T-cell (primary cell): ENCODE measurements at regions of chr10 and their contacts with region 1.

Region 1: DNA sequence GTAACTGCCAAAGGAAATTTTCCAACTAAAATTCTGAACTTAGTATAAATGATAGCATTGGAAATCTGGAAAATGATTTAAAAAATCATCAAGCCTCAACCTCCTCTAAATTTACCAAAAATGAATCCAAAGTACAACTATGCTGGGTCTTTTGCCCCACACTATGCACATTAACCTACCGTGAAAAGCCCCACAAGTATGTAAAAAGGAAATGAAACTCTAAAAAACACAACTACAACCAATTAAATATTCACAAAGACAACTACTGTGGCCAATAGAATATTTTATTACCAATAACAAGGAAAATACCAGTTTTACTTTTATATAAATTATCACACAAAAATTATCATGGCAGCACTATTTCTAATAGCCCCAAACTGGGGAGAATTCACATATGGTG is 19.3 kb downstream of the EIF3A start:
- DNase-seq: no peak
- ATAC-seq: no peak
- H3K4me3 ChIP-seq: no peak overlapping the region
- H3K4me3 Mint-ChIP-seq: no peak overlapping the region
- H3K27ac ChIP-seq: no peak overlapping the region
- H3K27ac Mint-ChIP-seq: peak overlapping the region; percentile 28 to 39
- H3K4me1 ChIP-seq: no peaks in the 10 kb centered on the region
- H3K4me1 Mint-ChIP-seq: peaks cover 16 to 31% (median 27%) of the 10 kb centered on the region in 3 donors
- H3K27me3 ChIP-seq: no peaks in the 10 kb centered on the region
- H3K27me3 Mint-ChIP-seq: no peaks in the 10 kb centered on the region

Region 2: GRCh38 chr10:119020629-119020950 is 40.8 kb before region 1 on chr10:
- CTCF ChIA-PET with region 1: no interaction called
- POLR2A ChIA-PET with region 1: interaction called in 1 of 2 experiments, 10 read pairs
- DNase-seq: no peak
- ATAC-seq: no peak
- H3K4me3 ChIP-seq: no peak overlapping the region
- H3K4me3 Mint-ChIP-seq: no peak overlapping the region
- H3K27ac ChIP-seq: no peak overlapping the region
- H3K27ac Mint-ChIP-seq: no peak overlapping the region
- H3K4me1 ChIP-seq: no peaks in the 10 kb centered on the region
- H3K4me1 Mint-ChIP-seq: no peaks in the 10 kb centered on the region
- H3K27me3 ChIP-seq: peaks cover 0 to 9% of the 10 kb centered on the region in 2 experiments
- H3K27me3 Mint-ChIP-seq: peaks cover 3 to 10% of the 10 kb centered on the region in 2 donors

Region 3: GRCh38 chr10:119030421-119031250 is 30.7 kb before region 1 on chr10:
- CTCF ChIA-PET with region 1: no interaction called
- POLR2A ChIA-PET with region 1: interaction called in 1 of 2 experiments, 10 read pairs
- DNase-seq: peak in 32 of 35 experiments; percentile 5 to 66 (median 32)
- ATAC-seq: peak; percentile 44 to 63 (median 58)
- H3K4me3 ChIP-seq: peak overlapping the region; percentile 15 to 48
- H3K4me3 Mint-ChIP-seq: peak overlapping the region; percentile 66 to 73 (median 69)
- H3K27ac ChIP-seq: no peak overlapping the region
- H3K27ac Mint-ChIP-seq: no peak overlapping the region
- H3K4me1 ChIP-seq: peaks cover 0 to 10% of the 10 kb centered on the region in 2 experiments
- H3K4me1 Mint-ChIP-seq: peaks cover 12 to 24% (median 13%) of the 10 kb centered on the region in 3 donors
- H3K27me3 ChIP-seq: peaks cover 0 to 7% of the 10 kb centered on the region in 2 experiments
- H3K27me3 Mint-ChIP-seq: no peaks in the 10 kb centered on the region